CD8-positive, alpha-beta T cell (primary cell): ENCODE measurements at regions of chr14 and their contacts with region 1.

Region 1: GRCh38 chr14:21510735-21511657 is at the start of gene METTL3:
- DNase-seq: peak; percentile 87 to 98 (median 92)
- ATAC-seq: peak; percentile 99
- H3K4me3 ChIP-seq: peak within 1 kb of the TSS; percentile 85 to 90
- H3K4me3 Mint-ChIP-seq: peak within 1 kb of the TSS; percentile 99
- H3K27ac ChIP-seq: peak within 1 kb of the TSS; percentile 88 to 89
- H3K27ac Mint-ChIP-seq: peak within 1 kb of the TSS; percentile 99
- H3K4me1 ChIP-seq: peaks cover 22% of the 10 kb centered on the region
- H3K4me1 Mint-ChIP-seq: peaks cover 39% of the 10 kb centered on the region
- H3K27me3 ChIP-seq: no peaks in the 10 kb centered on the region
- H3K27me3 Mint-ChIP-seq: no peaks in the 10 kb centered on the region
- CTCF ChIP-seq: no peak
- total RNA-seq, gene METTL3: 23.7 to 26.5 TPM

Region 2: GRCh38 chr14:21437063-21437901 is 73.7 kb before region 1 on chr14:
- CTCF ChIA-PET with region 1: no interaction called
- POLR2A ChIA-PET with region 1: interaction called, 4 read pairs
- intact Hi-C with region 1: loop called (anchors 1 kb)
- DNase-seq: peak; percentile 98 to 100 (median 99)
- ATAC-seq: peak; percentile 99
- H3K4me3 ChIP-seq: peak overlapping the region; percentile 74 to 83
- H3K4me3 Mint-ChIP-seq: peak overlapping the region; percentile 96
- H3K27ac ChIP-seq: peak overlapping the region; percentile 76 to 84
- H3K27ac Mint-ChIP-seq: peak overlapping the region; percentile 91
- H3K4me1 ChIP-seq: peaks cover 28% of the 10 kb centered on the region
- H3K4me1 Mint-ChIP-seq: peaks cover 64% of the 10 kb centered on the region
- H3K27me3 ChIP-seq: no peaks in the 10 kb centered on the region
- H3K27me3 Mint-ChIP-seq: no peaks in the 10 kb centered on the region
- CTCF ChIP-seq: no peak

Region 3: DNA sequence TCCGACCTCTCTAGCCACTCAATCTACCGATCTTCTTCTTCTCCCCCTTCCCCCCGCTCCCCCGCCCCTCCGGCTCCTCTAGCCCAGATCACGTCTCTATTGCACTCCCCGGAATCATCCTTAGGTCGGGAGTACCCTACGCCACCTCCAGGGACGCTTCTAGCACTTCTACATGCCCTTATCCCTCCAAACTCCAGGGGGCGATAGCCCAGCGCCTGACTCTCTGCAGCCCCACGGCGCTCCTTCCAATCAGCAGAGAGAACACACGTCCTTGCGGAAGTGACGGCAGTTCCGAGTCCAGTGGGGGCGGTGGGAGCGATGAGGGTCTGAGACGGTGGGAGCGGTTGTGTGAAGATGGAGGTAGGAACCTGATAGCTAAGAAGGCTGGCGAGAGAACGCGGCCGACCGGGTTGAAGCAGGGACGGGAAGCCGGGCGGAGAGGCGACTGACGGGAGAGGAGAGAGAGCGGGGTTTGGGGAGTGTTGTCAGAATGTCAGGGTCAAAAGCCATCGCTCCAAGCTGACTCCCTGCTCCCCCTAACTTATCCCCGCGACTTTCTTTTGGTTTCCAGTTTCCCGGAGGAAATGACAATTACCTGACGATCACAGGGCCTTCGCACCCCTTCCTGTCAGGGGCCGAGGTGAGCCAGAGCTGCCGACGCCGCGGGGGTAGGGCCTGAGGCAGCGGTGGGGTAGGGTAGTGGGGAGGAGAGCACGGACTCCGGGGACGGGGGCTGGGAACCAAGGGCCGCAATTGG is 33.9 kb before region 1 on chr14 and contains the starts of genes RAB2B and TOX4:
- CTCF ChIA-PET with region 1: interaction called, 14 read pairs
- POLR2A ChIA-PET with region 1: interaction called, 28 read pairs
- intact Hi-C with region 1: loop called (anchors 1 kb)
- DNase-seq: peak; percentile 86 to 99 (median 95)
- ATAC-seq: peak; percentile 96
- H3K4me3 ChIP-seq: peak within 1 kb of the TSS; percentile 87 to 94
- H3K4me3 Mint-ChIP-seq: peak within 1 kb of the TSS; percentile 99
- H3K27ac ChIP-seq: peak within 1 kb of the TSS; percentile 93 to 94
- H3K27ac Mint-ChIP-seq: peak within 1 kb of the TSS; percentile 99
- H3K4me1 ChIP-seq: peaks cover 22% of the 10 kb centered on the region
- H3K4me1 Mint-ChIP-seq: peaks cover 52% of the 10 kb centered on the region
- H3K27me3 ChIP-seq: no peaks in the 10 kb centered on the region
- H3K27me3 Mint-ChIP-seq: no peaks in the 10 kb centered on the region
- CTCF ChIP-seq: peak; percentile 98
- total RNA-seq, gene RAB2B: 24.0 to 26.6 TPM
- total RNA-seq, gene TOX4: 95.0 to 100 TPM

Region 4: DNA sequence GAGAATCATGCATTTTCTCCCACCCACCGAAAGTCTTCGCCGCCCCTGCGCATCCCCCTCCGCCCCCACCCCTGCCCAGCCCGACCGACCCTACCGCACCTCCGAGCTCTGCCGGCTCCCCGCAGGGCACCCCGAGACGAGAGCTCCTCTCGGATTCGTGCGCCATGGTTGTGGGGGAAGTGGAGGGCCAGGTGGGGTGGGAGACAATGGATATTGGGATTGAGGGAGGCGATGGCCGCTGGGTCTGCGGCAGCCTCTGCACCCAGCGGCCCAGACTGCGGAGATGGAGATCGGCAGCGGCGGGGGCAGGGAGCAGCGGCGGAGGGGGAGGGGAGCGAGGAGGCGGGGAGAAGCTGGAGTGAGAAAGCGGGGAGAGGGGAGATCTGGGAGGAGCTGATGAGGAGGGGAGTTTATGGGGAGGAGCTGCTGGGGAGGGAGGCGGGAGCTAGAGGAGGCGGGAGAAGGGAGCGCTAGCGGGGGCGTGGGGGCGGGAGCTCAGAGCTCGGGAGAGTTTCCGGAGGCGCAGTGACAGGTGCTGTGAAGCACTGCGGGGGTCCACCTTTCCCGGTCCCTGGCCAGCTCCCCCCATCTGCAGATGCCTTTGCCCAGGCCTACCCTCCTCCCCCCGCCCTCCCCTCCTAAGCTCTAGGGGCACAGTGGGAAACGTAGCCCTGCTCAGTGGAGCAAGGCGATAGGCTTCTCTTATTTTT is 15.1 kb after region 1 on chr14 and contains the start of gene SALL2:
- CTCF ChIA-PET with region 1: interaction called, 4 read pairs
- POLR2A ChIA-PET with region 1: interaction called, 44 read pairs
- intact Hi-C with region 1: loop called in 1 of 2 experiments (anchors 1 kb)
- DNase-seq: peak; percentile 12 to 81 (median 64)
- ATAC-seq: peak; percentile 88
- H3K4me3 ChIP-seq: peak within 1 kb of the TSS; percentile 57 to 62
- H3K4me3 Mint-ChIP-seq: peak within 1 kb of the TSS; percentile 82
- H3K27ac ChIP-seq: peak within 1 kb of the TSS in 1 of 2 experiments; percentile 29
- H3K27ac Mint-ChIP-seq: peak within 1 kb of the TSS; percentile 84
- H3K4me1 ChIP-seq: peaks cover 14% of the 10 kb centered on the region
- H3K4me1 Mint-ChIP-seq: peaks cover 19% of the 10 kb centered on the region
- H3K27me3 ChIP-seq: no peaks in the 10 kb centered on the region
- H3K27me3 Mint-ChIP-seq: no peaks in the 10 kb centered on the region
- CTCF ChIP-seq: no peak
- total RNA-seq, gene SALL2: 1.4 to 1.6 TPM